Activated naive CD4-positive, alpha-beta T cell treated with anti-CD3 and anti-CD28 coated beads, Interleukin-2, amount 10 ng/mL, durations not matched to agents 7 days and 5 days (primary cell): ENCODE measurements at regions of chr16 and their contacts with region 1.

Region 1: GRCh38 chr16:50326949-50327402 is 41.8 kb downstream of the BRD7 start:
- DNase-seq: peak; percentile 85
- H3K4me3 Mint-ChIP-seq: no peak overlapping the region
- H3K27ac Mint-ChIP-seq: peak overlapping the region; percentile 90
- H3K4me1 Mint-ChIP-seq: peaks cover 67% of the 10 kb centered on the region
- H3K27me3 Mint-ChIP-seq: no peaks in the 10 kb centered on the region

Region 2: DNA sequence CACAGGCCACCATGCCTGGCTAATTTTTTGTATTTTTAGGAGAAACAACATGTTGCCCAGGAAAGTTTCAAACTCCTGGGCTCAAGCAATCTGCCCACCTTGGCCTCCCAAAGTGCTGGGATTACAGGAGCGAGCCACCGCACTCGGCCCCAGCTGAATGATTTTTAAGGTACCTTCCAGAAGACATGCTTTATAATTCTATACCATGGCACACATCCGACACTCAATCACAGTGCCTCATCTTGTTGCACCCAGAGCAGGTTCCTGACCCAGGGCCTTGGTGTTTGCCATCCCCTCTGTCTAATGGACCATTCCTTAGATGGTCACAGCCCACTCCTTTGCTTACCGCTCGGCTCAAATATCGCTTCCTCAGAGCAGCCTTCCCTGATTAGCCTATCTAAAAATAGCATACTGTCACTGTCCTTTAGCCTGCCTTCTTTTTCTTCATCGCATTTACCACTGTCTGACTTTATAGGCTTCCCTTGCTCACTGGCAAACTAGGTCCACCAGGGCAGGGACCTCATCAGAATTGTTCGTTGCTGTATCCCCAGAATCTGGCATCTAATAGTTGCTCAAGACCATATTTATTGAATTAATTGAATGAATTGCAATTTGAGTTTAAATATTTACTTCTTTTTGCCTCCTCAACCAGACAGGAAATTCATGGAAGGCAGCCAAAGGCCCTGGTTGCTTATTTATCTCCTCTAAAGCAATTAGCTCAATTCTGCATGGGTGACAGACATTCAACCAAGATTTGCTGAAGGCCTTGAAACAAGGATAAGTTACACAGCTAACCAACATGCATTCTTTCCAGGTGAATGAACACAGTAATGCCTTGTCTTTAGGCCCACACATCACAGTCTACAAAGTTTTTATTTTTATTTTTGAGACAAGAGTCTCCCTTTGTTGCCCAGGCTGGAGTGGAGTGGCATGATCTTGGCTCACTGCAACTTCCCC is 180.2 kb before region 1 on chr16:
- CTCF ChIA-PET with region 1: no interaction called
- DNase-seq: no peak
- H3K4me3 Mint-ChIP-seq: no peak overlapping the region
- H3K27ac Mint-ChIP-seq: no peak overlapping the region
- H3K4me1 Mint-ChIP-seq: peaks cover 9% of the 10 kb centered on the region
- H3K27me3 Mint-ChIP-seq: no peaks in the 10 kb centered on the region

Region 3: GRCh38 chr16:50210266-50211038 is 116.5 kb before region 1 on chr16:
- CTCF ChIA-PET with region 1: interaction called, 12 read pairs
- DNase-seq: peak; percentile 84
- H3K4me3 Mint-ChIP-seq: no peak overlapping the region
- H3K27ac Mint-ChIP-seq: no peak overlapping the region
- H3K4me1 Mint-ChIP-seq: peaks cover 29% of the 10 kb centered on the region
- H3K27me3 Mint-ChIP-seq: no peaks in the 10 kb centered on the region

Region 4: DNA sequence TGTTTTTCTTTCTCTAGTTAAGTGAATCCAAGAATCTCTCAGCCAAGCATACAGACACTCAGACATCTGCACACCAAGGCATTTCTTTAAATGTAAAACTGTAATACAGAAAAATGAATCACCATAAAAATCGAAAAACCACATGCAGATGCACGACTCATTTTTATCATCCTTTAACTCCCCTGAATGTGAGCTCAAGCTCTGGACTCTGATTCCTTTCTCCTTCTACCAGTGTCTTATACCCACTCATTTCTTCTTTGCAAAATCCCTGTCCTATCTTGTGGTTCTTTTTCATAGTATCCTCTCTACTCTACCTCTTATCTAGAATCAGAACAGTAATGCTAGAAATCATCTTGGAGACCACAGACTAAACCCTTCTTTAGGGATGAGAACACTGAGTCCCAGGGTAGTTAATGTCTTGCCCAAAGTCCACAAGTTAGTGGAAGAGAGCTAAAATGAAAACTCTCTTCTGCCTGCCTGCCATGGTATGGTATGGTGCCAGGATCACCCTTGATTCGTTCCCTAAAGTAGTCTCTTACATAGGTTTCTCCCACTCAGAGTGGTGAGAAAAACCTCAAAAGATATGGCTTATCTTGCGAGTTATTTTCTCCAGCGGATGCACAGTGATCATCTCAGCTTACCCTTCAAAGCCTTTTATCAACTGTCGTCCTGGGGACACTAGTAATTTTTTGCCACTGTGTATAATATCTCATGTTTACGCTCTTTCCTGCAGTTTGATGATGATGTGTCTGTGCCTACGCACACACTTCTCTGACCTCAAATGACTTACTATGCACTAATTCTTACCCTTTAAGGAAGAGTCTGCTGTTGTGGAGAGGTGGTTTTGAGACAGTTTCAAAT is 11.6 kb after region 1 on chr16:
- CTCF ChIA-PET with region 1: interaction called, 30 read pairs
- DNase-seq: peak; percentile 43
- H3K4me3 Mint-ChIP-seq: peak overlapping the region; percentile 60
- H3K27ac Mint-ChIP-seq: peak overlapping the region; percentile 98
- H3K4me1 Mint-ChIP-seq: peaks cover 72% of the 10 kb centered on the region
- H3K27me3 Mint-ChIP-seq: no peaks in the 10 kb centered on the region

Region 5: GRCh38 chr16:50360033-50360778 is 33.2 kb after region 1 on chr16:
- CTCF ChIA-PET with region 1: interaction called, 156 read pairs
- DNase-seq: no peak
- H3K4me3 Mint-ChIP-seq: no peak overlapping the region
- H3K27ac Mint-ChIP-seq: no peak overlapping the region
- H3K4me1 Mint-ChIP-seq: peaks cover 25% of the 10 kb centered on the region
- H3K27me3 Mint-ChIP-seq: no peaks in the 10 kb centered on the region

Region 6: GRCh38 chr16:50509521-50510341 is 182.8 kb after region 1 on chr16:
- CTCF ChIA-PET with region 1: interaction called, 17 read pairs
- DNase-seq: peak; percentile 58
- H3K4me3 Mint-ChIP-seq: no peak overlapping the region
- H3K27ac Mint-ChIP-seq: no peak overlapping the region
- H3K4me1 Mint-ChIP-seq: no peaks in the 10 kb centered on the region
- H3K27me3 Mint-ChIP-seq: peaks cover 6% of the 10 kb centered on the region